IMR-90 (cell line): ENCODE measurements at regions of chr2 and their contacts with region 1.

Region 1: DNA sequence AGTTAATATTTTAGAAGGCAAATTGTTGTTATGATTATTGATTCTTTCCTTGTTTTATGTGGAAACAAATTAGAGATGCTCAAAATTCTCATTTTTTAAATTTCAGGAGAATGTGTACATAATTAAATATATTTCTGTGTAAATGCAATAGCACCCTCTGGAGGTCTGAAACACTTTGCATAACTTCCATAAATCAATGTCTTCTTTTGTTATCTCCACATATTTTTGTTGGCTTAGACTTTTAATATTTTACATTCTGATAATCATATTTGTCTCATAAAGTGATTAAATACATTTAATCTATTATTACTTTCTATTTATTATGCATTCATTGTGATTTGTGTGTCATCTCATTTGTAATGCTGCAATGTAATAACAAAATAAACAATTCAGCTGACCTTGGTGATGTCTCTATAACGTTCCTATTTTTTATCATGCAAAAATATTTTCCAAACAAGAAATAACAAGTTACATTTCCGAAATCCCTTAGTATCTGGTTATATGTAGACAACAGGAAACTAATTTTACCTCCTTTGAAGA is 201.8 kb upstream of the GALNT5 start:
- DNase-seq: peak; percentile 53
- ATAC-seq: 0 out of 2 replicates have a peak, but pooled peaks have one; percentile 19
- H3K4me3 ChIP-seq: no peak overlapping the region
- H3K27ac ChIP-seq: peak overlapping the region; percentile 42; the same call in 1 of the 2 replicates
- H3K4me1 ChIP-seq: peaks cover 7% of the 10 kb centered on the region
- H3K27me3 ChIP-seq: no peaks in the 10 kb centered on the region
- CTCF ChIP-seq: peak; percentile 57
- POLR2A ChIP-seq: no peak
- RAD21 ChIP-seq: peak; percentile 58

Region 2: DNA sequence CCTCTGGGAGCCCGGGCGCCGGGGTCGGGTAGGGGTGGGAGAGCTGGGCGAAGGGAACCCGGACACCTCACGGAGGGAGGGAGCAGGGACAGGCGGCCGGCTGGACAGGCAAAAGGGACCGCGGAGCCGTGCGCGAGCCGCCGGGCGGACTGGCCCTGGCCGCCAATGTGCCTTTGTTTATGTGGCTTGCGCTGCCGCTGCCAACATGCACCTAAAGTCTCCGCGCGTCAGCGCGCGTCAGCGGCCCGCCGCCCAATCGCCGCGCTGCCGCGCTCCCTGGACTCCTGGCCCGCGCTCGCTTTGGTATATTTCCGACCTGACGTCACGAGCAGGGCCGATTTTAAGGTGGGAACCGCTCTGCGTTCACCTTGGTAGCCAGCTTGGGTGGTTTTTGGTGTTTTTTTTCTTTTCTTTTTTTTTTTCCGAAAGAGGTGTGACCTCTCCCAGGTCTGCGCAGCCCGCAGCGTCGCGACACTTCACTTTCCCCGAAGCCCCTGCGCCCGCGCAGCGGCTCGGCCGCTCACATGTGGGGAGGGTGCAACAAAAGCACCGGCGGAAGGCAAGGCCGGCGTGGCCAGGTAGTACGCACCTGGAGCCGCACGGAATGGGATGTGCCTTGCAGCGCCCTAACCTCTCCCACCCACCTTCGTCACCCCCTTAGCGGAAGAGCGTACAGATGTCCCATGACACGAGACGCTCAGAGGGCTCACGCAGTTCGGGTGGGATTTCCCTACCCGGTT is 723.0 kb before region 1 on chr2 and contains the start of gene NR4A2:
- CTCF ChIA-PET with region 1: interaction called, 4 read pairs
- POLR2A ChIA-PET with region 1: no interaction called
- dilution Hi-C with region 1: no loop called
- in situ Hi-C with region 1: loop called (anchors 25 kb)
- intact Hi-C with region 1: loop called (anchors 2 kb)
- DNase-seq: peak; percentile 92
- ATAC-seq: peak; percentile 69
- H3K4me3 ChIP-seq: peak within 1 kb of the TSS; percentile 88
- H3K27ac ChIP-seq: peak within 1 kb of the TSS; percentile 93
- H3K4me1 ChIP-seq: no peaks in the 10 kb centered on the region; the same call in none of the 2 replicates
- H3K27me3 ChIP-seq: no peaks in the 10 kb centered on the region
- CTCF ChIP-seq: no peak
- POLR2A ChIP-seq: peak; percentile 99
- RAD21 ChIP-seq: no peak
- total RNA-seq, gene NR4A2: 0.72 and 2.8 TPM in 2 replicates

Region 3: DNA sequence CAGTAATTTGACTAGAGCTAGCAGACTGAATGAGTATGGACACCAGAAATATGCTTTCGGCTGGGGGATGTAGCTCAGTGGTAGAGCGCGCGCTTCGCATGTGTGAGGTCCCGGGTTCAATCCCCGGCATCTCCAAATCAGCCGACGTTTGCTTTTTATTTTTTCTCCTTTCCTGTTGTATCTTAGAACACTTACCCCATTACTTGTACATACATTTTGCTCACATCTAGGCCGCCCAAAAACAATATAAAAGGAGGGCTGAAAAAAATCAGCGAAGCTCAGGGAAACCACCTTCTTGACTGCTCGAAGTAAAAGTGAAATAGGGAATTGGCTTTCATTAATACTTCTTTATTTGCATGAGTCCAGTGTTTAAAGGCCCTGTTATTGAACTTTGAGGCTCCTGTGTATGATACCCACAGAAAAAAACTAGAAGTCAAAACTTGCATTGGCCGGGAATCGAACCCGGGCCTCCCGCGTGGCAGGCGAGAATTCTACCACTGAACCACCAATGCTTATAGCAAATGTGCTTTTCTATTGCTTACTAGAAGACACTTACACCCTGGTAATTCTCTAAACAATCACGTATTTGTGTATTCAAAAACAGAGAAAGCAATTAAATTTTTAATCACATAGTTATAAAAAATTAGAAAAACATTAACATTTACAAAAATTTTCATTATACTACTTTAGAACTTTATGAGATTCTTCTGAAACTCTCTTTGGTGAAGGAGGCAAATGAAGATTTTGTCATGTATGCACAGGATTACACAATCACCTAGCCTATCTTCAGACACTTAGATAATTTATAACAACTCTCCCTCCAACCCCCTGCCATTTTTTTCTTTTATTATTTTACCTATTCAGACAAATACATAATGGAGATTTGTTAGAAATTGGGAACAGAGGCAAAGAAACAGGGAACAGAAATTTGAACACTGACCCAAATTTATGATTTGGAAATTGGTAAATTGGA is 654.7 kb before region 1 on chr2:
- CTCF ChIA-PET with region 1: no interaction called
- POLR2A ChIA-PET with region 1: no interaction called
- dilution Hi-C with region 1: no loop called
- in situ Hi-C with region 1: no loop called
- intact Hi-C with region 1: loop called (anchors 1 kb)
- DNase-seq: peak; percentile 85
- ATAC-seq: peak; percentile 92
- H3K4me3 ChIP-seq: peak overlapping the region; percentile 55
- H3K27ac ChIP-seq: no peak overlapping the region
- H3K4me1 ChIP-seq: peaks cover 5% of the 10 kb centered on the region
- H3K27me3 ChIP-seq: peaks cover 8% of the 10 kb centered on the region; the same call in 1 of the 2 replicates
- CTCF ChIP-seq: no peak
- POLR2A ChIP-seq: no peak
- RAD21 ChIP-seq: no peak

Region 4: GRCh38 chr2:156826341-156826933 is 229.3 kb before region 1 on chr2:
- CTCF ChIA-PET with region 1: no interaction called
- POLR2A ChIA-PET with region 1: no interaction called
- dilution Hi-C with region 1: no loop called
- in situ Hi-C with region 1: no loop called
- intact Hi-C with region 1: loop called (anchors 5 kb)
- DNase-seq: peak; percentile 82
- ATAC-seq: peak; percentile 74
- H3K4me3 ChIP-seq: no peak overlapping the region
- H3K27ac ChIP-seq: no peak overlapping the region
- H3K4me1 ChIP-seq: peaks cover 4% of the 10 kb centered on the region; the same call in 1 of the 2 replicates
- H3K27me3 ChIP-seq: no peaks in the 10 kb centered on the region
- CTCF ChIP-seq: no peak
- POLR2A ChIP-seq: no peak
- RAD21 ChIP-seq: no peak

Region 5: DNA sequence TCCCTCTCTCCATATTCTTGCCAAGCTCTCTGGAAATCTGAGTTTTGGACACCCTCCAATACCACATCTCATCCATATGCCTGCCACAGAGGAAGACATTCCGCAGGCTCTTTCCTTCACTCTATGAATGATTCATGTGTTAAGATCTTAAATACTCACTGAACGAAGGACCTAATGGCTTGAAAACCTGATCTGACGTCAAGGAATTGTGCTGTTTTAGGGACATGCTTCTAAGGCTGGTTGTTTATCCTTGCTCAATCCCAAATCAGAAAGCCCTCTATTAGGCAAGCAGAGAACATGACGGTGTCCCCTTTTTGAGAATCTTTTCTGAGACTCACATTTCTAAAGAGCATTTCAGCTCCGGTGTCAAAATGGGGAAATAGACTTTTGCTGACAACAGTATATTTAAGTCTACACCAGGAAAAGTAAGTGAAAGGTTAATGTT is 118.0 kb after region 1 on chr2:
- CTCF ChIA-PET with region 1: no interaction called
- POLR2A ChIA-PET with region 1: no interaction called
- dilution Hi-C with region 1: no loop called
- in situ Hi-C with region 1: loop called (anchors 5 kb)
- intact Hi-C with region 1: loop called (anchors 5 kb)
- DNase-seq: peak; percentile 100
- ATAC-seq: peak; percentile 89
- H3K4me3 ChIP-seq: no peak overlapping the region
- H3K27ac ChIP-seq: peak overlapping the region; percentile 16; the same call in 1 of the 2 replicates
- H3K4me1 ChIP-seq: peaks cover 9% of the 10 kb centered on the region
- H3K27me3 ChIP-seq: no peaks in the 10 kb centered on the region
- CTCF ChIP-seq: no peak
- POLR2A ChIP-seq: no peak; the same call in 1 of the 2 replicates
- RAD21 ChIP-seq: 0 out of 2 replicates have a peak, but pooled peaks have one; percentile 2